GM13977 (cell line): ENCODE measurements at regions of chr3 and their contacts with region 1.

Region 1: GRCh38 chr3:100068826-100069225 is 45.5 kb downstream of the FILIP1L start:
- DNase-seq: peak; percentile 77
- CTCF ChIP-seq: peak; percentile 81

Region 2: DNA sequence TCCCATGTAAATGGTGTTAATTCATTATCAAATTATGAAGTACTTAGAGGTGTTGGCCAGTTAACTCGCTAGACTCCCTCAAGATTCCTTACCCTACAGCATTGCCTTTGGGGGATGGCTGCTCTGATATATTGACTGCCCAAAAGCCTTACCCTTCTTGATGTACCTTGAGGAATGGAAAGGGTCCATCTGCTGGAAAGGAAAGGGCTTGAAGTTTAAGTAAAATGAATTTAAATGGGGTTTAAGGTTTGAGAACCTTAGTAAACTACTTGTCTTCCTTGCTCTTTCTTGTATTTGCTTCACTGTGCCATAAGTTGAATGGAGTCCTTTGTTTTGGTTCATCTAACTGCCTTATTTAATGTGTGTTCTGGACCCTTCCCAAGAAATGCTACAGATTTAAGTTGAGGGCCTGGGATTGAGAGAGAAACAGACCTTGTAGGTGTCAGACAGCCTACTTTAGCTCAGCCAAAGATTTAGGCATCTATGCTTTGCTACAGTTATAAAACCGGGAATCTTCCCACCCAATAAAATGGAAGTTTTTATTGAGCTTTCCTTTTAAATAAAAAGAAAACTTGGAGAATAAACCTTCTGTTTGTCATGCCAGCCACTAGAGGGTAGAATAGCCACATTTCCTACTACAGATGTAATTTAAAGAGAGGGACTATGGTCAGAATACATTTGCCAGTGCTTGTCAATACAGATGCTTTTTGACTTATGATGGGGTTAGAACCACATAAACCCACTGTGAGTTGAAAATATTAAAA is 225.8 kb before region 1 on chr3:
- in situ Hi-C with region 1: loop called (anchors 10 kb)
- DNase-seq: no peak
- CTCF ChIP-seq: peak; percentile 64